ENCODE measurements at regions of chr18 and their contacts with region 1.

Region 1: DNA sequence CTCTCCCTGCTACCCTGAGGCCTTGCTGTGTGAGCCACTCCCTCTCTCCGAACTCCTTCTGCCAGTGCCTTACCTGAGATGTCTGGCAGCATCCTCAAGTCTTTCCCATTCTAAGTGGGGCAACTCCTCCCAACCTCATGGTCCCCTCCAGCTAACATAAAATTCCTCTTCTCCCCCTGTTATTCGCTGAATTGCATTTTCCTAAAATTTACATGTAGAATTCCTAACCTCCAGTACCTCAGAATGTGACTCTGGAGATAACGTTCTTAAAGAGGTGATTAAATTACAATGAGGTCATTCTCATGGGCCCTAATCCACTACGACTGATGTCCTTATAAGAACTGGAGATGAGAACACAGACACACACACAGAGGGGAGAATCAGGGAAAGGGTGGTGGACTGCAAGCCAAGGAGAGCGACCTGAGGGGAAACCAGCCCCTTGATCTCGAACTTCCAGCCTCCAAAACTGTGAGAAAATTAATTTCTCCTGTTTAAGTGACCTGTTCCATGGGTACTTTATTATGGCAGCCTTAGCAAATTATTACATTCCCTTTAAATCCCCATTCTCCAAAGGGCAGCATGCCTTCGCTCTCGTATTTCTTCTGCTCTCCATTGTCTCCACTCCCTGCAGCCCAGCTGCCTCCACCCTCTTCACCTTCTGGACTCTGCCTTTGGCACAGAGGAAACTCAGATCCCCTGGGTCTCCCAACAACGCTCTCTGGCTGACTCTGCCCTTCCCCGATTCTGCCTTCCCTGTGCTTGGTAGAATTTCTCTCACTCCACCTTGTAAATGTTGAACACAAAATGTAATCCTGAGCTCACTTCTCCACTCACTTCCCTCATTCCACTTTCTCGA is 70.5 kb downstream of the TGIF1 start:
- DNase-seq: no peak
- H3K4me3 ChIP-seq: no peak overlapping the region
- H3K27ac ChIP-seq: no peak overlapping the region
- H3K4me1 ChIP-seq: no peaks in the 10 kb centered on the region
- H3K27me3 ChIP-seq: no peaks in the 10 kb centered on the region
- CTCF ChIP-seq: no peak
- POLR2A ChIP-seq: no peak

Region 2: DNA sequence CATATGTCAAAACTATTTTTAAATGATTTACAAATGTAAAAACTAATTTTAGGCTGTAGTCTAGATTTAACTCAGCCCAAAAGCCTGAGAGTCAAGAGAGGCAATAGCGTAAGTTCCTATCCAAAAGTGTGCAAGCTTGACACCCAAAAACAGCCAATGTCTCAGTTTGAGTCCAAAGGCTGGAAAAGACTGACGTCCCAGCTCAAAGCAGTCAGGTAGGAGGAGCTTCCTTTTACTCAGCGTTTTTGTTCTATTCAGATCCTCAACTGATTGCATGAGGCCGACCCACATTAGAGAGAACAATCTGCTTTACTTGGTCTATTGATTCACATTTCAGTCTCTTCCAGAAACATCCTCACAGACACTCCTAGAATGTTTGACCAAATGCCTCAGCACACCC is 206.8 kb before region 1 on chr18:
- intact Hi-C with region 1: no loop called
- DNase-seq: no peak
- H3K4me3 ChIP-seq: no peak overlapping the region
- H3K27ac ChIP-seq: no peak overlapping the region
- H3K4me1 ChIP-seq: no peaks in the 10 kb centered on the region
- H3K27me3 ChIP-seq: no peaks in the 10 kb centered on the region
- CTCF ChIP-seq: no peak
- POLR2A ChIP-seq: no peak

Region 3: GRCh38 chr18:3581890-3582289 is 61.4 kb after region 1 on chr18:
- intact Hi-C with region 1: loop called (anchors 2 kb)
- DNase-seq: no peak
- H3K4me3 ChIP-seq: no peak overlapping the region
- H3K27ac ChIP-seq: no peak overlapping the region
- H3K4me1 ChIP-seq: no peaks in the 10 kb centered on the region
- H3K27me3 ChIP-seq: no peaks in the 10 kb centered on the region
- CTCF ChIP-seq: no peak
- POLR2A ChIP-seq: no peak